ENCODE measurements at regions of chr11 and their contacts with region 1.

Region 1: GRCh38 chr11:93921695-93922468 is 71.5 kb upstream of the VSTM5 start:
- DNase-seq: no peak

Region 2: DNA sequence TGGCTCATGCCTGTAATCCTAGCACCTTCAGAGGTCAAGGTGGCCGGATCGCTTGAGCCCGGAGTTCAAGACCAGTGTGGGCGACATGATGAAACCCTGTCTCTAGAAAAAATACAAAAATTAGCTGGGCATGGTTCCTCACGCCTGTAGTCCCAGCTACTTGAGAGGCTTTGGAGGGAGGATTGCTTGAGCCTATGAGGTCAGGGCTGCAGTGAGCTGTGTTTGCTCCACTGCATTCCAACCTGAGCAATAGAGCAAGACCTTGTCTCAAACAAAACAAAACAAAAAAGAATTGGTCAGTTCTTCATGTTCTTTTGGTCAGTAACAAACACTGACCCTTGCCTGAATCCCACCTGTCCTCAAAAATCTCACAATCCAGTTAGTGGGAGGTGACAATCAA is 34.8 kb before region 1 on chr11:
- intact Hi-C with region 1: no loop called
- DNase-seq: no peak

Region 3: DNA sequence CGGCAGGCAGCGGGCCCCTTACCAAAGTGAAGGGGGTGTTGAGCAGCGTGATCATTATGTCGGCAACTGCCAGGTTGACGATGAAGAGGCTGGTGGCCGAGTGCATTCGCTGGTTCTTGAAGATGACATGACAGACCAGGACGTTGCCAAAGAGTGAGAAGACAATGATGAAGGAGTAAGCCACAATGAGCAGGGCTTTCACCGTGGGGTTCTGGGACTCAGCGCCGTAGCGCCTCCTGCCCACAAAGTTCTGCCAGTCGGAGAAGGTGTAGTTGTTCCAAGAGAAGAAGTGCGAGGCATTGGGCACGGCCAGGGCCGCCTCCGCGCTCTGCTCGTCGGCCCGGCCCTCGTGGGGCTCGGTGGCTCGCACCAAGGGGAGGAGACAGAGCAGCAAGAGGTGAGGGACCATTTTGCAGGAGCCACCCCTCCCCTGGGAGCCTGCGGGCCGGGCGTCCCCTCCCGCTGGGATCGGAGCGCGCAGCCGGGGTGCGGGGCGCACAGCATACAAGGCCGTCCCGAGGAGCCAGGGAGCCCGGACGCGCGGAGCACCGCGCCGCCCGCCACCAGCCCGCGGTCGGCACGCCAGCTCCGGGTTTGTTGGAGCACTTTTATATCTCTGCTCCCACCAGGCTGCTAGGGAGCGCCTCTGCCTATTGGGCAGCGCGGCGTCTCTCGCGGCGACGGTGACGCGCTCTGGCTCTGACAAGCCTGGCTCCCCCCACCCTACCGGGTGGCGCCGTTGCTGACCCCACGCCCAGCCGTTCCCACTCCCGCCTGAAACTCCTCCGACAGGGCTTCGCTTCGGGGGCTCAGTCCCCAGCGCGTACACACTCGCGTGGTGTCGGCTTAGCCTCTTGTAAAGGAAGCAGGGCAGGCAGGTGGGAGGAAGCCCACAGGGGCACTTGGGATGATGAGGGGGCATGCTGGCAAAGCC is 479.2 kb after region 1 on chr11 and contains the start of gene GPR83:
- intact Hi-C with region 1: loop called (anchors 10 kb)
- DNase-seq: no peak
- total RNA-seq, gene GPR83: not detected

Measured in cardiac septum (tissue), 1 donor.